ENCODE measurements at regions of chr19 and their contacts with region 1.

Region 1: DNA sequence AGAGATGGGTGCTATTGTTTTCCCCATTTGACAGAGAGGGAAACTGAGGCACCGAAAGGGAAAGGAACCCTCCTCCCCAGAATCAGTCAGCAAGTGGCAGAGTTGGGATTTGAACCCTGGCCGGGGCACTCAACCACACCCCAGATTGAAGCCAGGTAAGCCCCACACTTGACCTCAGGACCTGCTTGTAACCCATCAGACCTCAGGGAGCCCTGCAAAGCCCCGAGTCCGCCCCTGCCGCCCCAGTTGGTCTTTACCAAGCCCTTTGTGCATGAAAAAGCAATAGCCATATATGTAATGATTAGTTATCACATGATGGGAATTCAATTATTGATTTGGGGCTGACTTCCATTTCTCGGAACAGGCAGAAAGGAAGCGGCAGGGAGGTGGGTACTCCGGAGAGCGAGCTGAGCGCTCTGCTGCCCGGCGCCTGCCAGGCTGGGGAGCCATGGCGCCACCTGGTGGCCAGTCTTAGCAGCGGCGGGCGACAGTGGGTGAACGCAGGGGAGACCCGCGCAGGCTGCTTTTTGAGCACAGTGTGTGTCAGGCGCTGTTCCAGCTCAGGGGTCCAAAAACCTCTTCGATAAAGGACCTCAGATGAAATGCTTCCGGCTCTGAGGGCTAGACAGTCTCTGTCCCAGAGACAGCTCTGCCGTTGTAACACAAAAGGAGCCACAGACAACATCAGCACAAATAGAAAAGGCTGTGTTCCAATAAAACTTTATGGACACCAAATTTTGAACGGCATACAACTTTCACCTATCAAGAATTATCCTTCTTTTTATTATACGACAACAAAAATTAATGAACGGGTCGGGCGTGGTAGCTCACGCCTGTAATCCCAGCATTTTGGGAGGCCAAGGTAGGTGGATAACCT is 82.9 kb upstream of the CACNA1A start:
- DNase-seq: peak; percentile 94
- H3K4me3 ChIP-seq: no peak overlapping the region
- H3K27ac ChIP-seq: no peak overlapping the region
- H3K4me1 ChIP-seq: peaks cover 0 to 8% (median 7%) of the 10 kb centered on the region in 6 donors
- H3K27me3 ChIP-seq: peaks cover 0 to 66% (median 7%) of the 10 kb centered on the region in 7 donors
- CTCF ChIP-seq: peak; percentile 76 to 98 (median 92)
- POLR2A ChIP-seq: no peak

Region 2: GRCh38 chr19:13277104-13277809 is 311.9 kb before region 1 on chr19:
- intact Hi-C with region 1: loop called (anchors 5 kb)
- DNase-seq: peak; percentile 81
- H3K4me3 ChIP-seq: peak overlapping the region in 1 of 8 donors; percentile 32
- H3K27ac ChIP-seq: peak overlapping the region in 7 of 8 donors; percentile 32 to 77 (median 54)
- H3K4me1 ChIP-seq: peaks cover 0 to 12% (median 9%) of the 10 kb centered on the region in 6 donors
- H3K27me3 ChIP-seq: peaks cover 0 to 20% (median 0%) of the 10 kb centered on the region in 7 donors
- CTCF ChIP-seq: peak; percentile 69 to 90 (median 81)
- POLR2A ChIP-seq: no peak

Measured in spleen (tissue), 13 donors.